GM13976 (cell line): ENCODE measurements at regions of chr1 and their contacts with region 1.

Region 1: GRCh38 chr1:153192697-153193096 is 10.5 kb upstream of the LELP1 start:
- DNase-seq: peak; percentile 24
- CTCF ChIP-seq: peak; percentile 34

Region 2: DNA sequence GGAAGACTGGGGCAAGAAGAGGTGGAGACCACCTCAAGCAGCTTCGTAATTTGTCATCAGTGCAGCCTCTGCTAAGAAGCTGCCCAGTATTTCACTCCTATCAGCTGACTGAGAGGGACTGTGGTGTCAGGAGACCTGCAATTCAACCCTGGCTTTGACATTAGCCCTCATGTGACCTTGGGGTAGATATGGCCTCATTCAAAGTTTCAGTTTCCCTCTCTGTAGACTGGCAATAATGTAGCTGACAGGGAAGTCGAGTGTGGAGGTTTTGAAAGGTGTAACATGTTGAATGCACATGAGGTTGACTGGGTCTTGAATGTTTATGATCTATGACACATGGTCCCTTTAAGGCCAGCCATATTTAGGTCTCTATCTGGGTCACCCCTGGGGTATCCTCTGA is 224.4 kb before region 1 on chr1:
- in situ Hi-C with region 1: loop called (anchors 25 kb)
- DNase-seq: peak; percentile 27
- CTCF ChIP-seq: no peak